ENCODE measurements at regions of chr6 and their contacts with region 1.

Region 1: DNA sequence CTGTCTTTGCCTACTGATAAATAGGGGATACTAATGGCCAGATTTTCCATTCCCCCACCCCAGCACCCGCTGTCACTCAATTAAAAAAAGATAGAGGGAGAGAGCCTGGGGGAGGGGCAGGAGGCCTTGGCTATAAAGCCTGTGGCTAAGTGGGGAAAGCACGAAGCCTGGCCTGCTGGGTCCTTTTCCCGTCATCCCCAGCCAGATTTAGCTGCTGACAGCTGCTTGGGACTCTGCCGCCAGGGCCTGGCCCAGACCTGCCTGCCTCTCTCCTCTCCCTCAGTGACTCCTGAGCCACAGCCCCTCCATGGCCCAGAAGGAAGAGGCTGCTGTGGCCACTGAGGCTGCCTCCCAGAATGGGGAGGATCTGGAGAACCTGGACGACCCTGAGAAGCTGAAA is at the start of gene APOBEC2:
- DNase-seq: no peak
- ATAC-seq: no peak
- H3K4me3 Mint-ChIP-seq: no peak within 1 kb of the TSS
- H3K27ac Mint-ChIP-seq: peak within 1 kb of the TSS; percentile 76
- H3K4me1 Mint-ChIP-seq: peaks cover 13% of the 10 kb centered on the region
- H3K27me3 Mint-ChIP-seq: no peaks in the 10 kb centered on the region
- CTCF ChIP-seq: no peak
- total RNA-seq, gene APOBEC2: not detected

Region 2: GRCh38 chr6:40727271-40727670 is 325.8 kb before region 1 on chr6:
- CTCF ChIA-PET with region 1: no interaction called
- POLR2A ChIA-PET with region 1: no interaction called
- intact Hi-C with region 1: no loop called
- DNase-seq: no peak
- ATAC-seq: no peak
- H3K4me3 Mint-ChIP-seq: no peak overlapping the region
- H3K27ac Mint-ChIP-seq: no peak overlapping the region
- H3K4me1 Mint-ChIP-seq: no peaks in the 10 kb centered on the region
- H3K27me3 Mint-ChIP-seq: no peaks in the 10 kb centered on the region
- CTCF ChIP-seq: no peak

Region 3: GRCh38 chr6:41039060-41039998 is 13.7 kb before region 1 on chr6 and contains the start of gene UNC5CL:
- CTCF ChIA-PET with region 1: interaction called, 20 read pairs
- POLR2A ChIA-PET with region 1: interaction called, 3 read pairs
- intact Hi-C with region 1: no loop called
- DNase-seq: peak; percentile 73
- ATAC-seq: peak; percentile 77
- H3K4me3 Mint-ChIP-seq: no peak within 1 kb of the TSS
- H3K27ac Mint-ChIP-seq: no peak within 1 kb of the TSS
- H3K4me1 Mint-ChIP-seq: peaks cover 8% of the 10 kb centered on the region
- H3K27me3 Mint-ChIP-seq: no peaks in the 10 kb centered on the region
- CTCF ChIP-seq: peak; percentile 71
- total RNA-seq, gene UNC5CL: 2.3 to 2.6 TPM

Region 4: GRCh38 chr6:41066867-41067304 is 13.8 kb after region 1 on chr6:
- CTCF ChIA-PET with region 1: interaction called, 47 read pairs
- POLR2A ChIA-PET with region 1: no interaction called
- intact Hi-C with region 1: no loop called
- DNase-seq: peak; percentile 77
- ATAC-seq: no peak
- H3K4me3 Mint-ChIP-seq: no peak overlapping the region
- H3K27ac Mint-ChIP-seq: no peak overlapping the region
- H3K4me1 Mint-ChIP-seq: peaks cover 39% of the 10 kb centered on the region
- H3K27me3 Mint-ChIP-seq: no peaks in the 10 kb centered on the region
- CTCF ChIP-seq: peak; percentile 94

Region 5: DNA sequence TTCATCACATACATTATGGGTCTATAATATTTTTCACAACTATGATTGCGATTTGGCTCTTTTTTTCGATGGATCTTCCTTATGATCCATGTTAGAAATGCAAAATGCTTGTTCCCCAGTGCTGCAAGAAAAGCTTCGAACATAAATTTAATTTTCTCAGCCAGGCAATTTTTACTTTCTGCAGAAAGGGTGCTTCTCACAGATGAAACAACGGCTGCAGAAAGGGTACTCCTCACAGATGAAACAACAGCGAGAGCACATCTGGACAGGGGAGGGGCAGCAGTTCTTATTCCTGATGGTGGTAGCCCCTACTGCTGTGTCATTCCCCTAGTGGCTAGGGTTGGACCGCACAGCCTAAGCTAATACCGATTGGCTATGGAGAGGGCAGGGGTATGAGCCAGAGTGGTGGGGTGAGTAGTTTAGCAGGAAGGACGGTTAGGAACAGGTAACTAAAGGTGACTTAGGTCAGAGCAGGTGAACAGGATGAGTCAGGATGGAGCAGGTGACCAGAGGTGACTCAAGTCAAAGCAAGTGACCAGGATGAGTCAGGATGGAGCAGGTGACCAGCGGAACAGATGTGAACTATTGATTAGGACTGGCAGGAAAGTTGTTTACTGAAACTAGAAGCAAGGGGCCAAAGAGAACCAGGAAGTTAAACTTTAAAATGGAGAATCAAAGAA is 161.7 kb after region 1 on chr6:
- CTCF ChIA-PET with region 1: no interaction called
- POLR2A ChIA-PET with region 1: no interaction called
- intact Hi-C with region 1: no loop called
- DNase-seq: no peak
- ATAC-seq: no peak
- H3K4me3 Mint-ChIP-seq: no peak overlapping the region
- H3K27ac Mint-ChIP-seq: no peak overlapping the region
- H3K4me1 Mint-ChIP-seq: no peaks in the 10 kb centered on the region
- H3K27me3 Mint-ChIP-seq: no peaks in the 10 kb centered on the region
- CTCF ChIP-seq: no peak